Mammary epithelial cell (primary cell): ENCODE measurements at regions of chr4 and their contacts with region 1.

Region 1: DNA sequence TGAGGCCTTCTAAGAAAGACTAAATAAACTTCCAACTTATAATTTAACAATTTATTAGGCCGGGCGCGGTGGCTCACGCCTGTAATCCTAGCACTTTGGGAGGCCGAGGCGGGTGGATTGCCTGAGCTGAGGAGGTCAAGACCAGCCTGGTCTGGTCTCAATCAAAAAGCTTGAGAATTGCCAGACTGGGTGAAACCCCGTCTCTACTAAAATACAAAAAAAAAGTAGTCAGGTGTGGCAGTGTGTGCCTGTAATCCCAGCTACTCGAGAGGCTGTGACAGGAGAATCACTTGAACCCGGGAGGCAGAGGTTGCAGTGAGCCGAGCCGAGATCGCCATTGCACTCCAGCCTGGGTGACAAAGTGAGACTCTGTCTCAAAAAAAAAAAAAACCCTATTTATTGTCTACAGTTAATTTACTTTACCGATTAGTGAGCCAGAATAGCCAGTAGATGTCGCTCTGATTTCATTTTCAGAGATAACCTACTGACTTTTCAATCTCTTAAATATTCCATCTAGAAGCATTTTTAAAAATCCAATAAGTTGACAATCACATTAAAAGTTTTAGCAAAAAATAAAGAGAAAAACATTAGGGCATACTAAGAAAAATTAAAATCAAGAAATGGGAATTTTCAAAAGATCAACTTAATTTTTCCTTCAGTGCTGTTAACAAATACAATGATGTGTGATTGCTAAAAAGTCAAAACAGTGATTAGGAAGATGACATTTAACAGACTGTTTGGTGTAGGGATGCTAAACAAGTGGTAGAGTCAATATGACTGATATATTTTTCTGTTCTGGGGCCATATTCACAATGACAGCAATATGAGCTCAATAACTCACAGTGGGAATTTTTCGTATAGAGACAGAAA is 4.3 kb upstream of the SHROOM3 start:
- DNase-seq: peak; percentile 23
- H3K4me3 ChIP-seq: no peak overlapping the region
- H3K27ac ChIP-seq: no peak overlapping the region
- H3K4me1 ChIP-seq: peaks cover 17% of the 10 kb centered on the region
- H3K27me3 ChIP-seq: no peaks in the 10 kb centered on the region
- CTCF ChIP-seq: peak; percentile 57 to 65

Region 2: DNA sequence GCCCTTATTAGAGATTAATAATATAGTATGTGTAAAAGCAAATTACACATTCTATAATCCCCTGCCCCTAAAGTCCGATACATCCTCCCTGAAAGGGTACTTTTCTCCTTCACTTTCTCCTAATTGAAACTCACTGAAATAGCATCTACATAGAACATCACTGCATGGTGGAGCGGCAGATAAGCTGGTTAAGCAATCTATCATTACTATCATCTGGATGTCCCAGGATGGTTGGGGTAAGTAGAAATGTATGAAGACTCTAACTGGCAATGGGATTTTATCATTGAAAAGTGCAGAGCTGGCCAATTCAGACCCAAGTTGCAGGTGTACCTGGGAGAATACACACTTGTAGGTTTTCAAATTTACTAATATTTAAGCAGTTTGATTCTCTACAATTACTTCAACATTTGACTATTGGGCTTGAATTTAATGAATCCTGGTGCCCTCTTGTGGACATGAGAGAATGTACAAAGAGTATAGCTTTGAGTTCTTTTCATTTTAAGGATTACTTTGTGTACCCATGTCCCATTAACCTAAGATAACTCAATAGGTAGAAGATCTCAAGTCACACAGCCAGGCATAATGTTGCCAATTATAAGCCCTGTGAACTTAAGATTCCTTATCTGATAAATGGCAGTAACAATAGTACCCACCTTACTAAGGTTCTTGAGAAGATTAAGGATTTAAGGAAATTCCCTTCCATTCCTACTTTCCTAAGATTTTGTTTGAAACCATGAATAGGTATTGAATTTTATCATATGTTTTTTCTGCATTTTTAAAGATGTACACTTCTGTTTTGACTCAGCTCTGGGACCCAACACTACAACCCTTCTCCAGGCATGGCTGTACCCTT is 74.1 kb after region 1 on chr4:
- CTCF ChIA-PET with region 1: interaction called, 9 read pairs
- dilution Hi-C with region 1: loop called (anchors 5 kb)
- in situ Hi-C with region 1: loop called (anchors 5 kb)
- intact Hi-C with region 1: loop called (anchors 1 kb)
- DNase-seq: peak; percentile 27
- H3K4me3 ChIP-seq: no peak overlapping the region
- H3K27ac ChIP-seq: no peak overlapping the region
- H3K4me1 ChIP-seq: peaks cover 3% of the 10 kb centered on the region
- H3K27me3 ChIP-seq: no peaks in the 10 kb centered on the region
- CTCF ChIP-seq: peak; percentile 49 to 67

Region 3: GRCh38 chr4:76689241-76689817 is 258.6 kb after region 1 on chr4:
- CTCF ChIA-PET with region 1: no interaction called
- dilution Hi-C with region 1: no loop called
- in situ Hi-C with region 1: no loop called
- intact Hi-C with region 1: no loop called
- DNase-seq: peak; percentile 68
- H3K4me3 ChIP-seq: peak overlapping the region; percentile 69 to 95 (median 77)
- H3K27ac ChIP-seq: peak overlapping the region; percentile 91
- H3K4me1 ChIP-seq: peaks cover 42% of the 10 kb centered on the region
- H3K27me3 ChIP-seq: no peaks in the 10 kb centered on the region
- CTCF ChIP-seq: no peak

Region 4: GRCh38 chr4:76738086-76738931 is 307.6 kb after region 1 on chr4:
- CTCF ChIA-PET with region 1: no interaction called
- dilution Hi-C with region 1: no loop called
- in situ Hi-C with region 1: no loop called
- intact Hi-C with region 1: loop called (anchors 5 kb)
- DNase-seq: no peak
- H3K4me3 ChIP-seq: no peak overlapping the region
- H3K27ac ChIP-seq: no peak overlapping the region
- H3K4me1 ChIP-seq: no peaks in the 10 kb centered on the region
- H3K27me3 ChIP-seq: no peaks in the 10 kb centered on the region
- CTCF ChIP-seq: no peak

Region 5: DNA sequence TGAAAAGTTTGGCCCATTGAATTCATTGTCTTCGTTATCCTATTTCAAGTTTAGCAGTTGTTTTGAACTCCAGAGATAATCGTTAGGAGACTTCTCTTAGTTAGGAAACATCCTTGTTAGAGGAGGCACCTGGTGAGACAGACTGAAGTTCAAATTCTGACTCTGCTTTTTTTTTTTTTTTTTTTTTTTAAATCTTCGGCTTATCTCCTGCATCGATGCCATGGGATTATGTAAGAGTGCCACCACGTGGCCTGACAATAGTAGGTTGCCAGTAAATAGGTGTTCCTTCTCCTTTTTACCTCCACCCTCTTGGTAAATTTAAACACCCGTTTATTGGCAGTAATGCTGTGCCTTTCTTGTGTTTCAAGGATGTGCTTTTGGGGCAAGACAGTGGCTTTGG is 317.9 kb after region 1 on chr4:
- CTCF ChIA-PET with region 1: no interaction called
- dilution Hi-C with region 1: no loop called
- in situ Hi-C with region 1: loop called in 1 of 2 experiments (anchors 10 kb)
- intact Hi-C with region 1: loop called (anchors 5 kb)
- DNase-seq: no peak
- H3K4me3 ChIP-seq: no peak overlapping the region
- H3K27ac ChIP-seq: no peak overlapping the region
- H3K4me1 ChIP-seq: peaks cover 34% of the 10 kb centered on the region
- H3K27me3 ChIP-seq: no peaks in the 10 kb centered on the region
- CTCF ChIP-seq: peak; percentile 32 to 48

Region 6: DNA sequence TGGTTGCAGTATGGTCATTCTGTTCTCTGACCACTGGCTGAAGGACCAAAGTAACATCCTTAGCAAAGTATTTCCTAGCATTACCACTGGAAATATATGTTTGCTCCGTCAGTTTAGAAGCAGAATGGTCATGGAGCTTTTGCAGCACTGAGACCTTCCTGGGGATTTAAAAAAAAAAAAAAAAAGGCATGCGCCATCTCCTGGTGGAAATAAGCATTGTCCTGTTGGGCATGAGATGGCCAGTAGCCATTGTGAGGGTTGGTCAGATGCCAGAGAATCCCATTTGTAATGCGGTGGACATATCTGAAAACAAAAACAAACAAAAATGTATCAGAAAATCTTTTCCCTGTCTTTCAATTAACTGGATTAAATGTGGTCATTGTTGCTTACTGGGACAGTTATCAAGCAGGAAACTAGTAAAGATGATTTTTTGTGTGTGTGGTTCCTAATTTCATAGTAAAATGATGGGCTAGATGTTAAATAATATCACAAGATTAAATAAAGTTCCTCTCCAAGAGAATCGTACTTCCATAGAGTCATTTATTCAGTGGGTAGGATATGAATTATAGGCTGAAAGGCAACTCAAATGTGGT is 327.6 kb after region 1 on chr4:
- CTCF ChIA-PET with region 1: no interaction called
- dilution Hi-C with region 1: no loop called
- in situ Hi-C with region 1: loop called in 1 of 2 experiments (anchors 10 kb)
- intact Hi-C with region 1: loop called (anchors 5 kb)
- DNase-seq: peak; percentile 55
- H3K4me3 ChIP-seq: no peak overlapping the region
- H3K27ac ChIP-seq: no peak overlapping the region
- H3K4me1 ChIP-seq: peaks cover 16% of the 10 kb centered on the region
- H3K27me3 ChIP-seq: no peaks in the 10 kb centered on the region
- CTCF ChIP-seq: peak; percentile 73 to 91